ENCODE measurements at regions of chr7 and their contacts with region 1.

Region 1: DNA sequence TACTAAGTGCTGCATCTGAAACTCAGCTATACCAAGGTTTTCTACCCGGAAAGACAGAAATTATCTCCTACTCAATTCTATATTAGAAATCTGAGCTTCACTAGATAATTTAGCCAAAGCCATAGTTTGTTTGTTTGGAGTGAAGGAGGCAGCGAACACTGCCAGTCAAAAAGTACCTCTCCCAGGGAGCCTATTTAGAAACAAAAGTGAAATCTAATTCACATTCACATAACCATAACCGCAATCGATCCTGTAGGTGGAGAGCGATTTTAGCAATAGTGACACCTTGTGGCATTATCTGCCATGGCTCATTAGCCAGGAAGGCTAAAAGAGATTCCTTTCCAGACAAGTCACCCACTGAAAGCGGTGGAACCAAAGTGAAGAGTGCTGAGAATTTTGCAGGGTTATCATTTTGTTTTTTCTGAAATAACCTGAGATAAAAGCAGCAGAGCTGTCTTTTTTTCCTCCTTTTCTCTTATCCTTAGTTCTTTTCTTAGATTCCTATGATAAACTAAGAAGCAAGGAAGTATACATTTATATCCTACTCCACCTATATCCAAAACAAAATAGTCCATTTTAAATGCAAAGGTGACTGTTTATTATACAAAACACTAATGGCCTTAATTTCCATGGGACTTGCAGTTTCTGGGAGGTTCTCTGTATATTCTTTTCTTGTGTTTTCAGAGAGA is 83.7 kb upstream of the BET1 start:
- DNase-seq: peak; percentile 88
- H3K4me3 Mint-ChIP-seq: peak overlapping the region; percentile 60
- H3K27ac Mint-ChIP-seq: no peak overlapping the region
- H3K4me1 Mint-ChIP-seq: peaks cover 4% of the 10 kb centered on the region
- H3K27me3 Mint-ChIP-seq: peaks cover 31% of the 10 kb centered on the region

Region 2: DNA sequence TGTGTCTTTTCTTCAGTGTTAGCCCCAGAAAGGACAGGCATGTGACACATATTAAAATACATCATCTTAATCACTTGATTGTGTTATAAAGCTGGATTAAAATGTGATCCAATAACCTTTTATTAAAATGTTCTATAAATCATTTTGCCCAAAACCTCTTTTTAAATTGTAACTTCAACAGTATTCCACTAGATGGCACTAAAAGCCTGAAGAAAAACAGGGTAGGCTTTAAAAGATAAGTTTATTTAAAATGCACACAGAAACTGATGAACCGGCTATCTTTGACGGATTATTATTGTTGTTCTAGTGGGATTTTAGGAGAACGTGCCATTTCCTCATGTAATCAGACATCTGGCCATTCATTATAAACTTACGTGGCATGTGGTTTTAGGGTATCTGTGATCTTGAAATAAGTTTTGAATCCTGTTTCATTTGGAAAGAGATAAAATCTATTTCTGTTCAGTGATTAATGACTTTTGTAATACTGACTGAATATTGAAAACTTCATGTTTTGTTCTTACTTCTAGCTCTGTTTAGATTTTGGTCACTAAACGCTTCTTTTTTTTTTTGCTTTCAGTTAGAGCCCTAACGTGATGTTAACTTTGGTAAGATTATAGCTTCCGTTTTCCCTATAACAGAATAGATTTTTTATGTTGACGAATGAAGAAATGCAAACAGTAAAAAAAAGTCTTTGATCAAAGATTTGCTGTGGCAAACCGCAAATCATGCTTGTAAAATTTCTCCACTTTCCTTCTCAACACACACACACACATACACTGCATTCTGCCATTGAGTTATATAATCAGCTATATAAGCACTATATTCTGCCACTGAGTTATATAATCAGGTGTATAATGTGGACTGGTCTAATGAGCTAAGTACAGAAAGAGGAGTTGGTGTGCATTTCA is 842.0 kb before region 1 on chr7:
- intact Hi-C with region 1: loop called (anchors 5 kb)
- DNase-seq: no peak
- H3K4me3 Mint-ChIP-seq: no peak overlapping the region
- H3K27ac Mint-ChIP-seq: no peak overlapping the region
- H3K4me1 Mint-ChIP-seq: no peaks in the 10 kb centered on the region
- H3K27me3 Mint-ChIP-seq: no peaks in the 10 kb centered on the region

Region 3: DNA sequence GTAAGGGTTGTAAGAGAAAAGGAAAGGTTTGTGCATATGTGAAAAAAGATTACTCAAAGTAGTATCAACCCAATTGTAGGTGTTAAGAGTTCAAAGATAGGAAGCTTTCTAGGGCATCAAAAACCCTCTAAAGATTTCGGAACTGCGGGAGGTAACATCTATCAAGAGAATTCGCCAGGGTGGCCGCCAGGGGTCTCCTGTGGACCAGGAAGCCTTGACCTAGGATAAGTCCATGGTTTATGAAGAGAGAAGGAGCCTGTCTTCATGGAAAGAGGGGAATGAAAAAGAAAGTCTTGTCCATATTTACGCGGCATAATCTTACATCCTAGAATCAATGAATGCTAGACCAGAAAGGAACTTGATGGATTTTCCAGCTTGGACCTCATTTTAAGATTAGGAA is 372.6 kb before region 1 on chr7:
- intact Hi-C with region 1: loop called (anchors 10 kb)
- DNase-seq: peak; percentile 58
- H3K4me3 Mint-ChIP-seq: no peak overlapping the region
- H3K27ac Mint-ChIP-seq: no peak overlapping the region
- H3K4me1 Mint-ChIP-seq: peaks cover 1% of the 10 kb centered on the region
- H3K27me3 Mint-ChIP-seq: peaks cover 7% of the 10 kb centered on the region

Region 4: GRCh38 chr7:93799750-93800357 is 288.0 kb before region 1 on chr7:
- intact Hi-C with region 1: loop called (anchors 5 kb)
- DNase-seq: no peak
- H3K4me3 Mint-ChIP-seq: no peak overlapping the region
- H3K27ac Mint-ChIP-seq: no peak overlapping the region
- H3K4me1 Mint-ChIP-seq: no peaks in the 10 kb centered on the region
- H3K27me3 Mint-ChIP-seq: no peaks in the 10 kb centered on the region

Region 5: DNA sequence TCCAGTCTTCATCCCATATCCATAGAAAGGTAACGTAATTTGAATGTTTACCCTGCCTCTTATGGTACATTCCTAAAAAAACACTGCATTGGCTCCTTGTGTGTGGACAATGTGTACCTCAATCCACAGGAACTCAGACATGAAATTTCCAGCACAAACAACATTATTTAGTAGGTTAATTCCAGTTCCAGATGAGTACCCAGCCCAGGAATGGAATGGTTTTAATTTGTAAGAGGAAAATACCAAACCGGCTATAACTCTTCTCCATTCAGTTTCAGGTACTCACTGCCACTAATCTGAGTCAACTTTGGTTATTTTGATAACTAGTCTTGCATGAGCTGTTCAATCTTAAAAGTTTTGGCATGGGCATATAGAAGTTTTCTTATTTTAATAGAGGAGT is 236.3 kb before region 1 on chr7:
- intact Hi-C with region 1: no loop called
- DNase-seq: no peak
- H3K4me3 Mint-ChIP-seq: no peak overlapping the region
- H3K27ac Mint-ChIP-seq: no peak overlapping the region
- H3K4me1 Mint-ChIP-seq: peaks cover 2% of the 10 kb centered on the region
- H3K27me3 Mint-ChIP-seq: no peaks in the 10 kb centered on the region

Region 6: GRCh38 chr7:93902777-93903423 is 184.9 kb before region 1 on chr7:
- intact Hi-C with region 1: loop called (anchors 1 kb)
- DNase-seq: peak; percentile 60
- H3K4me3 Mint-ChIP-seq: no peak overlapping the region
- H3K27ac Mint-ChIP-seq: no peak overlapping the region
- H3K4me1 Mint-ChIP-seq: no peaks in the 10 kb centered on the region
- H3K27me3 Mint-ChIP-seq: peaks cover 6% of the 10 kb centered on the region

Region 7: DNA sequence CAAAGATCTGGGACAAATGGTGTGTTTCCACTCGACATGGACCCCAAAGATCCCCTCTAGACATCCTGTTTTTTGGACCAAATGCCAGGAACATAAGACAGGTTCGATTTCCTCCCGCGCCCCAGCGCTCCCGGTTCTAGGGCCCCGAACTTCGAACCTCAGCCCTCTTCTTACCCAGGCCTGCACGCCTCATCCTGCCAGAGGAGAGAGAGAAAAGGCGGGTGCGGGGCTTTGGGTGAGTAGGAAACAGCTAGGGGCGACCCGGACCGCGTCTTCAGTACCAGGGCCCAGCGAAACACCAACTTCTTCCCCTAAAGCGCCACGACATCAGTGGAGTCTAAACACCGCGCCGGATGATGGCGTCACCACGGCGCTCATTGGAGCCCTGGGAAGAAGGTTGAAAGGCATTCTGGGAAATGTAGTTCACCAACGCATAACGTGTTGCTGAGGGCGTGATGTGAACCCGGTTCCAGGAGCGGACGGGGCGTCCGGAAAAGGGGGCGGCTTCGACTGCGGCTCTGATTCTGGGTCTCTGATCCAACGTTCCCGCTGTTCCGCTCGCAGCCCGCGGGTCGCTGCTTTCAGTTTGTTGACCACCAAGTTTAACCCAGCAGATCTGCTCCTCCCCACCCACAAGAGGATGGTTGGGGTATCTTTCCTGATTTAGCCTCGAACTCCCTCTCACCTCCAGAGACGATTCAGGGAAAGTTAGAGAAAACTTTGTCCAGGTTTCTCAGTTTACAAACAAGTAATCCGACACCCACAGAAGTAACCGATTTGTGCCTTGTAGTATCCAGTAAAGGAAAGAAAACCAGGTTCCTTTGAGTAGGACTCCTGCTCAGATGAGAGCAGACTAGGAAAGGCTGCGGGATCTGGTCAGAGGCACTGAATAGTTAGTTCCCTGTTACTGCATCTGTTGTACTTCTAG is 83.5 kb before region 1 on chr7 and contains the start of gene BET1:
- intact Hi-C with region 1: loop called (anchors 2 kb)
- DNase-seq: peak; percentile 98
- H3K4me3 Mint-ChIP-seq: peak within 1 kb of the TSS; percentile 94
- H3K27ac Mint-ChIP-seq: peak within 1 kb of the TSS; percentile 96
- H3K4me1 Mint-ChIP-seq: peaks cover 20% of the 10 kb centered on the region
- H3K27me3 Mint-ChIP-seq: peaks cover 17% of the 10 kb centered on the region
- total RNA-seq, gene BET1: 19.1 and 20.0 TPM in 2 replicates

Measured in activated CD4-positive, alpha-beta T cell treated with anti-CD3 and anti-CD28 coated beads, Interleukin-2, amount 10 ng/mL, durations not matched to agents 24 days and 14 days (primary cell).